ENCODE measurements at regions of chr18 and their contacts with region 1.

Region 1: DNA sequence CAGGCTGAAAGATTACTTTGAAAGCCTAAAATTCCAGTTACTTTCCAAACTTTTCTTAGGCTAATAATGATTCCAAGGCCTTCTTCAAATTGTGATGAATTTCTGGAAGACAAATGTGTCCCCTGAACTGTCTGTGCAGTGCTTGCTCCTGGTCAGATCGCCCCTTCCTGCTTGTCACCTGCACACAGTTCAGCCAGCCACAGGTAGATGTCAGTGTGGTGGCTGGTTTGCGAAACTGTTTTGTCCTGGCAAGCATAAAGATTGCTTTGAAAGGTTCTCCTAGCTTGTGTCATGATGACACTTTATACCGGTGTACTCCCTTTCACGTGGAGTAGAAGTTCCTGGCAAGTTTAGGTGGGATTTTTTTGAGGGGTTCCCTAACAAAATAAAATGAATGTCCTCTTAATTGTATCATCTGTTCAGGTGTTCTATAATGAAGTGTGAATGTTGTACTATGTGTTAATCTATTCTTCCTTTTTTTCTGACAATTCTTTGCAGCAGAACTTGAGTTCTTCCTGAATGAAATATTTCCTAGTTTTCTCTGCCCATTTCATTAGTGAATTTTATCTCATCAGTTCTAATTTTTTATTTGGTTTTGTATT is 298.8 kb downstream of the ZNF407 start:
- DNase-seq: peak in 8 of 9 experiments; percentile 24 to 68 (median 44)
- ATAC-seq: peak; percentile 64
- H3K4me3 ChIP-seq: no peak overlapping the region
- H3K4me3 Mint-ChIP-seq: no peak overlapping the region
- H3K27ac ChIP-seq: no peak overlapping the region
- H3K27ac Mint-ChIP-seq: no peak overlapping the region
- H3K4me1 ChIP-seq: no peaks in the 10 kb centered on the region
- H3K4me1 Mint-ChIP-seq: peaks cover 7% of the 10 kb centered on the region
- H3K27me3 ChIP-seq: no peaks in the 10 kb centered on the region
- H3K27me3 Mint-ChIP-seq: no peaks in the 10 kb centered on the region
- CTCF ChIP-seq: peak; percentile 60

Region 2: DNA sequence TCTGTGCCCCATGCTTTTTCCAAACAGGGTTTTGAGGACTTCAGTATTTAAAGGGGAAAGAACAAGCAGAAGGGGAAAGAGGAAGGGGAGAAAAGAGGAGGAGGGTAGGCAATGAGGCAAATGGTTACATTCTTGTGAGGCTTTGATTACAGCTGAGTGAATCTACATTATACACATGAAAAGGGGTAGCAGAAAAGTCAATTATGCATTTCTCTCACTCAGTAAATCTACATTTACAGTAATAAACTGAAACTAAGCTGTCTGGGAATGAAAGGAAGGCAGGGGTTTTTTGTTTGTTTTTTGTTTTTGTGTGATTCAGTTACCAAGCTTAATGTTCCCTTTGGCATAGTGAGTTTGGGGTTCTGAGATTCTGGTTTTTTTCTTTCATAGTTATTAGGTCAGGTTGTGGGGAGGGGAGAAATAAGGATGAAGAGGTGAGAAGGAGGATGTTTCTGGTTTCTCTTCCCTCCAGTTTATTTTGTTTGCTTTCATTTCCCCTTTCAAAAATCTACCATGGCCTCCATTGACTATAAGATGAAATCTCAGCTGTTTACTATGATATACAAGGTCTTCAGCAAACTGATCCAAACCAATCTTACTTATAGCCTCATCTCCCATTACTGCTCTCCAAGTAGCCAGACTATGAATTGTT is 562.1 kb before region 1 on chr18:
- CTCF ChIA-PET with region 1: no interaction called
- POLR2A ChIA-PET with region 1: no interaction called
- intact Hi-C with region 1: no loop called
- DNase-seq: no peak
- ATAC-seq: no peak
- H3K4me3 ChIP-seq: no peak overlapping the region
- H3K4me3 Mint-ChIP-seq: no peak overlapping the region
- H3K27ac ChIP-seq: no peak overlapping the region
- H3K27ac Mint-ChIP-seq: no peak overlapping the region
- H3K4me1 ChIP-seq: no peaks in the 10 kb centered on the region
- H3K4me1 Mint-ChIP-seq: no peaks in the 10 kb centered on the region
- H3K27me3 ChIP-seq: no peaks in the 10 kb centered on the region
- H3K27me3 Mint-ChIP-seq: peaks cover 13% of the 10 kb centered on the region
- CTCF ChIP-seq: no peak

Region 3: GRCh38 chr18:75081486-75081885 is 185.0 kb after region 1 on chr18:
- CTCF ChIA-PET with region 1: no interaction called
- POLR2A ChIA-PET with region 1: no interaction called
- intact Hi-C with region 1: loop called in 1 of 2 experiments (anchors 2 kb)
- DNase-seq: peak in 2 of 9 experiments; percentile 4 to 37
- ATAC-seq: no peak
- H3K4me3 ChIP-seq: no peak overlapping the region
- H3K4me3 Mint-ChIP-seq: no peak overlapping the region
- H3K27ac ChIP-seq: no peak overlapping the region
- H3K27ac Mint-ChIP-seq: no peak overlapping the region
- H3K4me1 ChIP-seq: no peaks in the 10 kb centered on the region
- H3K4me1 Mint-ChIP-seq: no peaks in the 10 kb centered on the region
- H3K27me3 ChIP-seq: no peaks in the 10 kb centered on the region
- H3K27me3 Mint-ChIP-seq: no peaks in the 10 kb centered on the region
- CTCF ChIP-seq: no peak

Region 4: GRCh38 chr18:75364512-75365253 is 468.2 kb after region 1 on chr18:
- CTCF ChIA-PET with region 1: interaction called, 8 read pairs
- POLR2A ChIA-PET with region 1: no interaction called
- intact Hi-C with region 1: loop called in 1 of 2 experiments (anchors 5 kb)
- DNase-seq: no peak
- ATAC-seq: no peak
- H3K4me3 ChIP-seq: no peak overlapping the region
- H3K4me3 Mint-ChIP-seq: no peak overlapping the region
- H3K27ac ChIP-seq: no peak overlapping the region
- H3K27ac Mint-ChIP-seq: no peak overlapping the region
- H3K4me1 ChIP-seq: no peaks in the 10 kb centered on the region
- H3K4me1 Mint-ChIP-seq: no peaks in the 10 kb centered on the region
- H3K27me3 ChIP-seq: peaks cover 0 to 4% of the 10 kb centered on the region in 2 experiments
- H3K27me3 Mint-ChIP-seq: peaks cover 2% of the 10 kb centered on the region
- CTCF ChIP-seq: no peak

Region 5: DNA sequence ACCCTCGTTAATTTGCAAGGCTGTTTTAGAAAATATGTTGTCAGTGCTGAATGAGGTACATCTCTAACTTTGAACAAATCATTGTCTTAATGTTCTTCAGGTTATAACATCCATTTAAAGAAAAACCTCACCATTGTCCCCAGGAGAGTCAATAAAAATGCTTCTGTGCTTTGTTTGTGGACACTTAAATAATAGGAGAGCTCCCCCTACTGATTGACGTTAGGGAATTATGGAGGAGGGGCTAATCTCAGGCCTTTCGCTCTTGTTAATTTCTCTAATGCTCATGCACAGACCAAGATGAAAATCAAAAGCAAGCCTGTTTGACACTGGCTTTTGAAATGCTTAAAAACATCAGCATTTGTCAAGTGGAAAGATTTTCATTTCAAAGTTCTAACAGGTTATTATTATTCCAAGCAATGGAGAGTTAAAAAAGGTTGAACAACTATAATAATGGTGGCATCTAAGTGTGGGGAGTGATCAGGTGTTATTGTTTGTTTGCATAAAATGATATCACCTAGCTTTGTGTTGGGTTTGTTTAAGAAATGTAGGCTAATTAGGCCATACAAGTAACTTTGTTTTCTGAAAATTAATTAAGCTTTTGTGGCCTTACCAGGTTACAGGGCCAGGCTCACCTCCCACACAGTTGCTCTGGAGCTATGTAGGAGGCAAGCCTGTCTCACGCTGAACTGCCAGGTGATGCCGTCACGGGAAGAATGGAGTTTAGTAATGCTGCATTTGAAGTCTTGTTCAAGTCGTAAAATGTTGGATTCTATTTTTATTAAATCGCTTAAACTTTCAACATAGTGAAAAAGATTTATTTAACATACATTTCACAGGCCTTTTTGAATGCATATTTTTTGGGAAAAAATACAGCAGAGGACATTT is 582.7 kb after region 1 on chr18:
- CTCF ChIA-PET with region 1: interaction called, 10 read pairs
- POLR2A ChIA-PET with region 1: no interaction called
- intact Hi-C with region 1: loop called in 1 of 2 experiments (anchors 1 kb)
- DNase-seq: peak in 2 of 9 experiments; percentile 54 to 65
- ATAC-seq: no peak
- H3K4me3 ChIP-seq: no peak overlapping the region
- H3K4me3 Mint-ChIP-seq: no peak overlapping the region
- H3K27ac ChIP-seq: no peak overlapping the region
- H3K27ac Mint-ChIP-seq: no peak overlapping the region
- H3K4me1 ChIP-seq: no peaks in the 10 kb centered on the region
- H3K4me1 Mint-ChIP-seq: peaks cover 2% of the 10 kb centered on the region
- H3K27me3 ChIP-seq: no peaks in the 10 kb centered on the region
- H3K27me3 Mint-ChIP-seq: peaks cover 4% of the 10 kb centered on the region
- CTCF ChIP-seq: peak; percentile 41

Region 6: DNA sequence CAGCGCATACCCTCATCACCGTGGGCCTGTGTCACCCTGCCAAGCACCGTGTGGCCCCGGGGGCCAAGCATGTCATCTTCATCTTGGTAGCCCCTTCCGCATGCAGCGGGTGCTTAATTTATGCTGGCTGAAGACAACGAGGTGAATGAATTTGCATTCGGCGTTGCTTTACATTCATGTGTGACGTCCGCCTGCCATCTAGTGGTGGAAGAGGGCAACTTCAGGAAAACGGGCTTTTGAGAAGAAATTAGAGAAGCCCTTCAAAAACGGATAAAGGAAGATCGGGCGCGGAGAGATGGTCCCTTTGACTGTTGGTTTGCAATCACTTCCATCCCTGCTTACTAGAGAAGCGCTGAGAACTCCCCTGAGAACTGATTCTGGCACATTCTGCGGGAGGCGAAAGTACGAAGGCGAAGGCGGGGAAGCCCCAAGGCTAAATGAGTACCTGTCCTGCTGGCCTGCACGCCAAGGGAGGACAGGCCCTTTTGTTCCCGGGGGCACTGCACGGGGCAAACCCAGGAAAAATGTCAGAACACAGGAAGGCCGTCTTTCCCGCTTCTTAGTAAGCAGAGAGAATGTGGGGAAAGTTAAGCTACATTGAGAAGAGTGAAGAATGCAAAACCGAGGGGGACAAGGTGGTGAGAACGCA is 1452.7 kb after region 1 on chr18:
- CTCF ChIA-PET with region 1: no interaction called
- POLR2A ChIA-PET with region 1: no interaction called
- intact Hi-C with region 1: loop called in 1 of 2 experiments (anchors 5 kb)
- DNase-seq: peak in 8 of 9 experiments; percentile 40 to 74 (median 60)
- ATAC-seq: peak; percentile 49
- H3K4me3 ChIP-seq: no peak overlapping the region
- H3K4me3 Mint-ChIP-seq: no peak overlapping the region
- H3K27ac ChIP-seq: no peak overlapping the region
- H3K27ac Mint-ChIP-seq: no peak overlapping the region
- H3K4me1 ChIP-seq: no peaks in the 10 kb centered on the region
- H3K4me1 Mint-ChIP-seq: peaks cover 4% of the 10 kb centered on the region
- H3K27me3 ChIP-seq: no peaks in the 10 kb centered on the region
- H3K27me3 Mint-ChIP-seq: peaks cover 7% of the 10 kb centered on the region
- CTCF ChIP-seq: peak; percentile 77

Measured in CD8-positive, alpha-beta T cell (primary cell).